ENCODE measurements at regions of chr10 and their contacts with region 1.

Region 1: GRCh38 chr10:23438550-23439441 is at the start of gene OTUD1:
- DNase-seq: peak; percentile 98
- ATAC-seq: peak; percentile 80
- H3K4me3 ChIP-seq: peak within 1 kb of the TSS; percentile 70 to 93 (median 87)
- H3K4me3 Mint-ChIP-seq: peak within 1 kb of the TSS; percentile 98
- H3K27ac ChIP-seq: peak within 1 kb of the TSS; percentile 83 to 92
- H3K27ac Mint-ChIP-seq: peak within 1 kb of the TSS; percentile 96
- H3K4me1 ChIP-seq: peaks cover 30 to 40% of the 10 kb centered on the region in 2 donors
- H3K4me1 Mint-ChIP-seq: peaks cover 49% of the 10 kb centered on the region
- H3K27me3 ChIP-seq: no peaks in the 10 kb centered on the region
- H3K27me3 Mint-ChIP-seq: no peaks in the 10 kb centered on the region
- CTCF ChIP-seq: no peak
- total RNA-seq, gene OTUD1: 66.3 and 69.0 TPM in 2 replicates

Region 2: DNA sequence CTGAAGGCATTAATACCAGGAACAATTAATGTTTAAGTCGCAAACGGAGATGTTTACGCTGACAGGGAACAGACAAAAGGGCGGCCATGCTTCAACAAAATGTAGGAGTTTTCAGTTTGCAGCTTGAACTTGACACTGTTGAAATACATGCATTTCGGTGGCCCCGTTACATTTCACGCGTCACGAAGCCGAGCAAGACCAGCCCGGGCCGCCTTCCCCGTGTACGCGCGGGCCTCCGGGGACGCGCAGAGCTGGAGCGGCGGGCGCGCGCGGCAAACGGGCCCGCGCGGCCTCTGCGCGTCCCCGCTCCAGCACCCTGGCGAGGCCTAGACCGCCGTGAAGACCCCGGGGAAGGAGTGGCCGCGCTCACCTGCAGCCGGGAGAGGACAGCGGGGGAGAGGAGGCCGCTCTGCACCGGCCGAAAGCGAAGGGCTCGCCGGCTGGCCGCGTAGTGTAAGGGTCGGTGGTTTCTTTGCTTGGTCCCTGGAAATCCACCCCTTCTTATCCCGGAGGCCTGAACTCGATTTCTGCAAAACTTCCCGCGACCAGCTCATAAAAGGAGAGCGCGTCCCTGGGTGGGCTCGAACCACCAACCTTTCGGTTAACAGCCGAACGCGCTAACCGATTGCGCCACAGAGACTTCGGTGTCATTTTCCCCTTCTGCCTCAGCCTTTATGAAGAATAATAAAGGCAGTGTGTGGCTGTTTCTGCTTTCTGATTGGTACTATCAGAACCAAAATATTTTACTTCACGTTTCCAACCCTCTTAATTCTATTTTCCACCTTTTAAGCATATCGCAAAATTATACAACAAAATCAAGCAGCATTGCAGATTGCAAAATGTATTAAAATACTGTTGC is 1209.6 kb before region 1 on chr10:
- CTCF ChIA-PET with region 1: no interaction called
- POLR2A ChIA-PET with region 1: no interaction called
- intact Hi-C with region 1: loop called (anchors 10 kb)
- DNase-seq: peak; percentile 96
- ATAC-seq: peak; percentile 81
- H3K4me3 ChIP-seq: peak overlapping the region; percentile 68 to 83 (median 81)
- H3K4me3 Mint-ChIP-seq: peak overlapping the region; percentile 90
- H3K27ac ChIP-seq: peak overlapping the region; percentile 66 to 77
- H3K27ac Mint-ChIP-seq: peak overlapping the region; percentile 100
- H3K4me1 ChIP-seq: no peaks in the 10 kb centered on the region
- H3K4me1 Mint-ChIP-seq: peaks cover 14% of the 10 kb centered on the region
- H3K27me3 ChIP-seq: no peaks in the 10 kb centered on the region
- H3K27me3 Mint-ChIP-seq: peaks cover 7% of the 10 kb centered on the region
- CTCF ChIP-seq: no peak

Region 3: GRCh38 chr10:22316285-22317120 is 1122.3 kb before region 1 on chr10 and contains the start of gene COMMD3:
- CTCF ChIA-PET with region 1: no interaction called
- POLR2A ChIA-PET with region 1: no interaction called
- intact Hi-C with region 1: loop called (anchors 5 kb)
- DNase-seq: peak; percentile 95
- ATAC-seq: peak; percentile 56
- H3K4me3 ChIP-seq: peak within 1 kb of the TSS; percentile 65 to 90 (median 84)
- H3K4me3 Mint-ChIP-seq: peak within 1 kb of the TSS; percentile 97
- H3K27ac ChIP-seq: peak within 1 kb of the TSS; percentile 88 to 92
- H3K27ac Mint-ChIP-seq: peak within 1 kb of the TSS; percentile 98
- H3K4me1 ChIP-seq: peaks cover 21 to 34% of the 10 kb centered on the region in 2 donors
- H3K4me1 Mint-ChIP-seq: peaks cover 36% of the 10 kb centered on the region
- H3K27me3 ChIP-seq: no peaks in the 10 kb centered on the region
- H3K27me3 Mint-ChIP-seq: no peaks in the 10 kb centered on the region
- CTCF ChIP-seq: no peak
- total RNA-seq, gene COMMD3: 74.3 and 78.0 TPM in 2 replicates

Region 4: GRCh38 chr10:23344241-23344841 is 94.5 kb before region 1 on chr10 and contains the start of gene C10orf67:
- CTCF ChIA-PET with region 1: no interaction called
- POLR2A ChIA-PET with region 1: no interaction called
- intact Hi-C with region 1: loop called (anchors 10 kb)
- DNase-seq: peak; percentile 49
- ATAC-seq: peak; percentile 49
- H3K4me3 ChIP-seq: peak within 1 kb of the TSS in 4 of 5 experiments; percentile 43 to 60 (median 58)
- H3K4me3 Mint-ChIP-seq: peak within 1 kb of the TSS; percentile 93
- H3K27ac ChIP-seq: no peak within 1 kb of the TSS
- H3K27ac Mint-ChIP-seq: no peak within 1 kb of the TSS
- H3K4me1 ChIP-seq: peaks cover 12 to 17% of the 10 kb centered on the region in 2 donors
- H3K4me1 Mint-ChIP-seq: peaks cover 21% of the 10 kb centered on the region
- H3K27me3 ChIP-seq: peaks cover 0 to 41% (median 18%) of the 10 kb centered on the region in 4 experiments
- H3K27me3 Mint-ChIP-seq: peaks cover 42% of the 10 kb centered on the region
- CTCF ChIP-seq: no peak
- total RNA-seq, gene C10orf67: not detected in 2 replicates

Region 5: GRCh38 chr10:23525406-23525805 is 86.6 kb after region 1 on chr10:
- CTCF ChIA-PET with region 1: interaction called, 4 read pairs
- POLR2A ChIA-PET with region 1: no interaction called
- intact Hi-C with region 1: loop called (anchors 5 kb)
- DNase-seq: peak; percentile 65
- ATAC-seq: peak; percentile 68
- H3K4me3 ChIP-seq: no peak overlapping the region
- H3K4me3 Mint-ChIP-seq: no peak overlapping the region
- H3K27ac ChIP-seq: no peak overlapping the region
- H3K27ac Mint-ChIP-seq: no peak overlapping the region
- H3K4me1 ChIP-seq: peaks cover 17 to 19% of the 10 kb centered on the region in 2 donors
- H3K4me1 Mint-ChIP-seq: peaks cover 33% of the 10 kb centered on the region
- H3K27me3 ChIP-seq: no peaks in the 10 kb centered on the region
- H3K27me3 Mint-ChIP-seq: peaks cover 6% of the 10 kb centered on the region
- CTCF ChIP-seq: peak; percentile 72